Posterior cingulate gyrus (tissue), 11 donors: ENCODE measurements at regions of chr22 and their contacts with region 1.

Region 1: GRCh38 chr22:17866127-17866526 is 91.9 kb upstream of the BID start:
- DNase-seq: peak; percentile 71 to 98 (median 86)

Region 2: GRCh38 chr22:17902960-17903359 is 36.8 kb after region 1 on chr22:
- intact Hi-C with region 1: loop called (anchors 1 kb)
- DNase-seq: no peak

Region 3: GRCh38 chr22:17912945-17913721 is 47.0 kb after region 1 on chr22:
- intact Hi-C with region 1: no loop called
- DNase-seq: no peak